Activated naive CD8-positive, alpha-beta T cell treated with anti-CD3 and anti-CD28 coated beads, Interleukin-2, amount 10 ng/mL, durations not matched to agents 7 days and 5 days (primary cell): ENCODE measurements at regions of chr11 and their contacts with region 1.

Region 1: GRCh38 chr11:74492974-74493790 is at the start of gene LIPT2:
- DNase-seq: peak; percentile 96
- ATAC-seq: peak; percentile 99
- H3K4me3 Mint-ChIP-seq: peak within 1 kb of the TSS; percentile 86
- H3K27ac Mint-ChIP-seq: peak within 1 kb of the TSS; percentile 86
- H3K4me1 Mint-ChIP-seq: peaks cover 11% of the 10 kb centered on the region
- H3K27me3 Mint-ChIP-seq: no peaks in the 10 kb centered on the region
- total RNA-seq, gene LIPT2: 3.1 to 6.7 TPM

Region 2: GRCh38 chr11:74170694-74171629 is 322.2 kb before region 1 on chr11 and contains the starts of genes C2CD3 and PPME1:
- POLR2A ChIA-PET with region 1: interaction called, 10 read pairs
- DNase-seq: peak; percentile 92
- ATAC-seq: peak; percentile 97
- H3K4me3 Mint-ChIP-seq: no peak within 1 kb of the TSS
- H3K27ac Mint-ChIP-seq: no peak within 1 kb of the TSS
- H3K4me1 Mint-ChIP-seq: peaks cover 17% of the 10 kb centered on the region
- H3K27me3 Mint-ChIP-seq: no peaks in the 10 kb centered on the region
- total RNA-seq, gene C2CD3: 36.2 to 37.6 TPM
- total RNA-seq, gene PPME1: 29.2 to 29.7 TPM

Region 3: GRCh38 chr11:74398244-74399159 is 94.7 kb before region 1 on chr11 and contains the start of gene PGM2L1:
- POLR2A ChIA-PET with region 1: interaction called, 22 read pairs
- DNase-seq: peak; percentile 92
- ATAC-seq: peak; percentile 84
- H3K4me3 Mint-ChIP-seq: peak within 1 kb of the TSS; percentile 99
- H3K27ac Mint-ChIP-seq: peak within 1 kb of the TSS; percentile 98
- H3K4me1 Mint-ChIP-seq: peaks cover 10% of the 10 kb centered on the region
- H3K27me3 Mint-ChIP-seq: no peaks in the 10 kb centered on the region
- total RNA-seq, gene PGM2L1: 8.6 to 10.5 TPM

Region 4: DNA sequence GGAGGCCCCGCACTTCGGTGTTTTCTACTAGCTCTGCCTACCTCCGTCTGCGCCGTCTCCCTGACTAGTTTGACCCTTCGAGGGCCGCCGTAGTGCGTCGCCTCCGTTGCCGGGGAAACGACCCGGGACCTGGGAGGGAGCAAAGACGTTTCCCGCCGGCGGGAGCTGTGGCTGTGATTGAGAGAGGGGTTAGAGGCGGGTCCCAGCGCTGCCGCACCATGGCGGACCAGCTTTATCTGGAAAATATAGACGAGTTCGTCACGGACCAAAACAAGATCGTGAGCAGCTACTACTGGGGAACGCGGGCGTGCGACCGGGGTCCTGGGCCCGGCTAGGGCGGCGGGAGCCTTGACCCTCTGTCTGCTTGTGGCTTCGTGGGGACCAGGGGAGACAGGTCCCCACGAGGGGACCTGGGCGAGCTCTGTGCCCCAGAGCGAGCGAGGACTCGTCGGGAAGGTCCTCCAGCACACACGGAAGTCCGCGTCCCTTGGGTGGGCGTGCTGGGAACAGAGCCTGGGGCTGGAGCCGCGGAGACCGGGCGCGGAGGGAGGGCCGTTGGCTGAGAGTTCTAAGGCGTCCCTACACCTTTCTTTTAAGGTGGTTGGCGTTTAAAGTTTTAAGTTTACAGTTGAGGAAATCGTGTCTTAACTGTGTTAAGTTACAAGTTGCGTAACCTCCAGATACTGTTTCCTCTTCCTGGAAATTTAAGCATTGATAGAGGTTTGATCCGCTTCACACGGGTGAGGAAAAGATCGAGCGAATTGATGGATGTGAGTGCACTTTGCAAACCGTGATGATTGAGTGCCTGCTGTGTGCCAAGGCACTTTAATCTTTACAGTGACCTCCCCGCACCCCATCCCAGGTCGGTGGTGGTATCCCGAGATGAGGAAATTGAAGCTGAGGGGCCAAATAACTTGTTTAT is 99.5 kb after region 1 on chr11 and contains the start of gene POLD3:
- POLR2A ChIA-PET with region 1: interaction called, 15 read pairs
- DNase-seq: peak; percentile 93
- ATAC-seq: peak; percentile 97
- H3K4me3 Mint-ChIP-seq: peak within 1 kb of the TSS; percentile 93
- H3K27ac Mint-ChIP-seq: peak within 1 kb of the TSS; percentile 89
- H3K4me1 Mint-ChIP-seq: peaks cover 18% of the 10 kb centered on the region
- H3K27me3 Mint-ChIP-seq: peaks cover 6% of the 10 kb centered on the region
- total RNA-seq, gene POLD3: 46.6 to 50.0 TPM